ENCODE measurements at regions of chr5 and their contacts with region 1.

Region 1: DNA sequence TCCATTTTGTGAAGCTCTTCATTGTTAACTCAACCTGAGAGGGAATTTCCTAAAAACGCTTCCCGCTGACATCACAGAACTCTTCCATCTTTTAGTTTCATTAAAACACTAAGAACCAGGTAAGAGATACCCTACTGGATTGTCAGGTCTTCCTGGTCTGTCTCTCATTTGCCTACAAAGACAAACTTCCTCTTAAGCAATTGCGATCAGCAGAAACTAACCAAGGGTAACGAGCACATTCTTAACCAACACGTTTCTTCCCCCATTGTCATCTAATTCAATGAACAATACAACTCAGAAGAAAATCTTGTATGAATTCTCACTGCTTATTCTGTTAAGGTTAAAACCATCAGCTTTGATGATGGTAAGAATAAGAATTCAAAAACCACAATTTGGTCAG is 6.6 kb downstream of the FBXW11 start:
- DNase-seq: no peak
- H3K4me3 ChIP-seq: no peak overlapping the region
- H3K27ac ChIP-seq: no peak overlapping the region
- H3K4me1 ChIP-seq: peaks cover 20% of the 10 kb centered on the region
- H3K27me3 ChIP-seq: no peaks in the 10 kb centered on the region
- CTCF ChIP-seq: no peak

Region 2: GRCh38 chr5:171961117-171961516 is 38.8 kb before region 1 on chr5:
- CTCF ChIA-PET with region 1: no interaction called
- dilution Hi-C with region 1: loop called (anchors 5 kb)
- in situ Hi-C with region 1: no loop called
- intact Hi-C with region 1: loop called (anchors 5 kb)
- DNase-seq: no peak
- H3K4me3 ChIP-seq: no peak overlapping the region
- H3K27ac ChIP-seq: no peak overlapping the region
- H3K4me1 ChIP-seq: peaks cover 8% of the 10 kb centered on the region
- H3K27me3 ChIP-seq: no peaks in the 10 kb centered on the region
- CTCF ChIP-seq: no peak

Region 3: DNA sequence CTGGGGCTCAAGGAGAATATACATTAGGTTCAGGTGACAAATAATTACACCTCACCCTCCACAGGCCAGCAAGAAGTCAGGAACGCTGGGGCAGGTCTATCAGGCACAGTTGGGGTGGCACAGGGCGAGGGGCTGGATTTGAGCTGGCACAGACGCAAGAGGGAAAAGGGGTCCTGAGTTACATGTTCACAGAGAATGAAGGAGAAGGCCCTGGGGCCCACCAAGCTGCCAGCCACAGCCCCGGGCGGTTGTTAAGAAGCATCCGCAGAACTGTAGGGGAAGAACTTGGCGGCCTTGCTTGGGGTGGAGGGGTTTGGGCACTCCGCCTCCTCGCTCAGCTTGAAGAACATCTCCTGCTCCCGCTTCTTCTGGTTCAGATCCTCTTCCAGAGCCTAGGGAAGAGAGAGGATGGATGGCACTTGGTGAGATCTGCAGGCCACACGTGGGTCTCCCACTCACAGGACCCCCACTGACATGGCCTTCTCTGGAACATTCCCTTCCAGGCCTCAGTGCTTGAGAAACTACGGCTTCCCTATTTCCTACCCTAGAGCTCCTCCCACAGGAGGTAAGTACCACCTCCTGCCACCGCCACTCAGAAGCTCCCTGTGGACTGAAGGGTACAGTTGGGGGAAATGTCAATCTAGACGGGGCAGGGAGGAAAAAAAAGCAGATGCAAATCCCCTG is 44.9 kb after region 1 on chr5:
- CTCF ChIA-PET with region 1: no interaction called
- dilution Hi-C with region 1: no loop called
- in situ Hi-C with region 1: no loop called
- intact Hi-C with region 1: no loop called
- DNase-seq: no peak
- H3K4me3 ChIP-seq: no peak overlapping the region
- H3K27ac ChIP-seq: no peak overlapping the region
- H3K4me1 ChIP-seq: no peaks in the 10 kb centered on the region
- H3K27me3 ChIP-seq: no peaks in the 10 kb centered on the region
- CTCF ChIP-seq: no peak

Region 4: DNA sequence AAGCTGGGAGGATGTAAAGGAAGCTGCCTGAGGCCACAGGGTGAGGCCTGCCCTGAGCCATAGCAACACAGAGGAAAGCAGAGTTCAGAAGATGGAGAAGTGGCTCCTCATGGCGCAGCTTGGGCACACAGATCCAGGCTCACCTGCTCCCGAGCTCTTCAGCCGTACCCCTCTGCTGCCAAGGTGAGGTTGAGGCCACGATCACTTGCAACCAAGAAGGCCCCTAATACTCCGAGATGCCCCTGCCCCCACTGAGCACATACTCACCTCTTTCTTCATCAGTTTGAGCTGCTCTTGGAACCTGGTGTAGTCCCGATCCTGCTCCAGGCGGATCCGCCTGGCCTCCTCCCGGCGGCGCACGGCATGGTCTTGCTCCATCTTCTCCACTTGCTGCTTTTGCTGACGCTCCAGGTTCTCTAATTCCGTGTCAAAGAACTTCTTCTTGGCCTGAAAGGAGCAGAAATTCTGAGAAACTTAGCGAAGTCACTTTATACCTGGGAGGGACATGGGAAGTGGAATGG is 82.2 kb after region 1 on chr5:
- CTCF ChIA-PET with region 1: no interaction called
- dilution Hi-C with region 1: loop called (anchors 5 kb)
- in situ Hi-C with region 1: no loop called
- intact Hi-C with region 1: no loop called
- DNase-seq: no peak
- H3K4me3 ChIP-seq: no peak overlapping the region
- H3K27ac ChIP-seq: no peak overlapping the region
- H3K4me1 ChIP-seq: no peaks in the 10 kb centered on the region
- H3K27me3 ChIP-seq: no peaks in the 10 kb centered on the region
- CTCF ChIP-seq: no peak